WTC11 (cell line): ENCODE measurements at regions of chr19 and their contacts with region 1.

Region 1: GRCh38 chr19:6530386-6531161 is at the start of gene TNFSF9:
- DNase-seq: peak; percentile 86
- ATAC-seq: peak; percentile 49
- H3K4me3 Mint-ChIP-seq: peak within 1 kb of the TSS; percentile 74
- H3K27ac Mint-ChIP-seq: peak within 1 kb of the TSS; percentile 60
- H3K4me1 Mint-ChIP-seq: peaks cover 48% of the 10 kb centered on the region
- H3K27me3 Mint-ChIP-seq: peaks cover 77% of the 10 kb centered on the region
- CTCF ChIP-seq: no peak
- total RNA-seq, gene TNFSF9: 2.6 to 2.9 TPM (median 2.7 TPM) in 3 replicates

Region 2: DNA sequence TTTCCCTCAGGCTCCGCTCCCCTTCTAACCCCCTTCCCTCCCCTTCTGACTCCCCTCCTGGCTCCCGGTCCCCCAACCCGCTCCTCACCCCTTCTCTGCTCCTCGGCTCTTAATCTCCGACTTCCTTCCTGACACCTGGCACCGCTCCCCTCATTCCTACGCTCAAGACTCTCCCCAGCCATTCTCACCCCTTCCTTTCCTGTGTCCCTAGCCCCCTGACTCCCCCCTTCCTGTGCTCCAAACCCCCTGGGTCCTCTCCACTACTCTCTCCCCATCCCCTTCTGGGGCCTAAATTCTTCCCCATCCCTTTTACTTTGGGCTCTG is 168.6 kb before region 1 on chr19:
- CTCF ChIA-PET with region 1: no interaction called
- POLR2A ChIA-PET with region 1: no interaction called
- DNase-seq: no peak
- ATAC-seq: peak; percentile 9
- H3K4me3 Mint-ChIP-seq: peak overlapping the region; percentile 83
- H3K27ac Mint-ChIP-seq: no peak overlapping the region
- H3K4me1 Mint-ChIP-seq: peaks cover 5% of the 10 kb centered on the region; the same call in 1 of the 2 replicates
- H3K27me3 Mint-ChIP-seq: peaks cover 8% of the 10 kb centered on the region; the same call in 1 of the 2 replicates
- CTCF ChIP-seq: no peak

Region 3: DNA sequence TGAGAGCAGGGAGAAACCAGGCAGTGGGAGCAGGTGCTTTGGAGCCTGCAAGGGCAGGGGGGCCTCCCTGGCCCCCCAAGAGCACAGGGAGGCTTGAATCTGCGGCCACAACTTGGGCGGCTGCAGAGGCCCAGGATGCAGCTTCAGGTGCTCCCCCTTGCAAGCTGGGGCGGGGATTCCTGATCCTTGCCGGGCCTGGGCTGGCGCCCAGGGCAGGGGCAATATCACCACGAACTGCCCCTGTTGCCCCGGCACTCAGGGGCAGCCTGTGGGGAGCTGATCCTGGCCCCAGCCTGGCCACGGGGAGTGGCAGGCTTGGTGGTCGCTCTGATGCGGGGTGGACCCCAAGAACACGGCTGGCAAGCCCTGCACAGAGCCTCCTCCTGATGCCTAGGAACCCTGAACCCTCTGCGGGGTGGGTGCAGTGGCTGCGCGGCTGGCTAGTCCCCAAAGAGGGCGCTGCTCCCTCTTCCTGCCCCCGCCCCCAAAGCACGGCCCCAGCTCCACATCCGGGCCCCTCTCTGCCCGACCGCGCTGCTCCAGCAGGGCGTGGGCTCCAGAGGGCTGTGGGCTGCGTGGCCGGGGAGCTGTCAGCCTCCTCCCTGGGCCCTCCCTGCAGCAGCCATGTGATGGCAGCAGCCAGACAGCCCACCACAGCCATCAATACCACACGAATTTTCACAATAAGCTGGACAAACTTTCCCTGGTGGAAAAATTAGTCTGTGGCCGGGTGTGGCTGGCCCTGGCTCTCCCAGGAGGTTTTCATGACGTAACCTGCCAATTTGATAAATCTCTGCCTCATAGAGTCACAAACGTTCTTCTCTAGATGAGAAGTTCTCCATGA is 21.3 kb after region 1 on chr19:
- CTCF ChIA-PET with region 1: interaction called, 35 read pairs
- POLR2A ChIA-PET with region 1: interaction called, 6 read pairs
- DNase-seq: peak; percentile 82
- ATAC-seq: peak; percentile 98
- H3K4me3 Mint-ChIP-seq: peak overlapping the region; percentile 29; the same call in 1 of the 2 replicates
- H3K27ac Mint-ChIP-seq: no peak overlapping the region
- H3K4me1 Mint-ChIP-seq: peaks cover 4% of the 10 kb centered on the region
- H3K27me3 Mint-ChIP-seq: 0 out of 2 replicates have a peak, but pooled peaks cover 5% of the 10 kb centered on the region
- CTCF ChIP-seq: peak; percentile 45; the same call in 1 of the 2 replicates

Region 4: GRCh38 chr19:6587093-6587820 is 56.7 kb after region 1 on chr19:
- CTCF ChIA-PET with region 1: interaction called, 4 read pairs
- POLR2A ChIA-PET with region 1: interaction called, 13 read pairs
- DNase-seq: peak; percentile 28
- ATAC-seq: peak; percentile 18
- H3K4me3 Mint-ChIP-seq: peak overlapping the region; percentile 73
- H3K27ac Mint-ChIP-seq: no peak overlapping the region; the same call in 1 of the 2 replicates
- H3K4me1 Mint-ChIP-seq: peaks cover 36% of the 10 kb centered on the region
- H3K27me3 Mint-ChIP-seq: peaks cover 96% of the 10 kb centered on the region
- CTCF ChIP-seq: no peak